ENCODE measurements at regions of chr5 and their contacts with region 1.

Region 1: GRCh38 chr5:143002459-143003328 is 232.5 kb downstream of the ARHGAP26 start:
- DNase-seq: no peak
- ATAC-seq: peak; percentile 58 to 72
- H3K4me3 ChIP-seq: no peak overlapping the region
- H3K27ac ChIP-seq: peak overlapping the region; percentile 52 to 76 (median 54)
- H3K4me1 ChIP-seq: peaks cover 38 to 39% of the 10 kb centered on the region in 2 donors
- H3K27me3 ChIP-seq: no peaks in the 10 kb centered on the region
- CTCF ChIP-seq: peak; percentile 49 to 69 (median 60)
- POLR2A ChIP-seq: peak in 1 of 2 donors; percentile 7

Region 2: DNA sequence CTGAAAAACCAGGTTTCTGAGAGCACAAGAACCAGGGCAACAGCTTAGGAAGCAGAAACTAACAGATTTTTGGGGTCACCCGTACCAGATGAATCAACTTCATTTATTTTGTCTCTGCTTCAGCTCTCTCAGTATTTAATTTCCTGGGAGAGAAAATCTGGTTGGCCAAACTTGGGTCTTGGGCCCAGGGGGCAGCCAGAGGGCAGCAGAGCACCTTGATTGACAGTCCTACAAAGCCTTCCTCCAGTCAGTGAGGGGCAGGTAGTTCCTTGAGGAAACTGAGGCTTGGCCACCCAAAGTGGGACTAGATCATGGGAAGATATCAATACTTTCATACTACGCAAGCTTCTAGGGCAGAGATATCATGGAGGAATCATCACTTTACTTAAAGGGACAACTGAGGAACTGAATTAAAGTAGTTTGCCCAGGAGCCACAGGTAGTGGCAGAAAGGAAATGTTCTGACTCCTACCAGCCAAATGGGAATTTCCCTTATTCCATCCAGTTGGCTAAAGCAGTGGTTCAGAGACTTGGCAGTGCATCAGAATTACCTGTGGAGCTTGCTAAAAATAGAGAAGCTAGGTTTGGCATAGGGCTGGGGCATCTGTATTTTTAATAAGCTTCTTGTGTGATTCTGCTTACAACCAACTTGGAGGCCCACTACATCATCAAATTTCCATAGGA is 254.0 kb before region 1 on chr5:
- in situ Hi-C with region 1: no loop called
- intact Hi-C with region 1: loop called (anchors 10 kb)
- DNase-seq: peak in 1 of 2 donors; percentile 11
- ATAC-seq: peak in 1 of 2 donors; percentile 39
- H3K4me3 ChIP-seq: no peak overlapping the region
- H3K27ac ChIP-seq: no peak overlapping the region
- H3K4me1 ChIP-seq: peaks cover 20 to 29% of the 10 kb centered on the region in 2 donors
- H3K27me3 ChIP-seq: no peaks in the 10 kb centered on the region
- CTCF ChIP-seq: peak; percentile 53 to 83 (median 77)
- POLR2A ChIP-seq: no peak

Region 3: DNA sequence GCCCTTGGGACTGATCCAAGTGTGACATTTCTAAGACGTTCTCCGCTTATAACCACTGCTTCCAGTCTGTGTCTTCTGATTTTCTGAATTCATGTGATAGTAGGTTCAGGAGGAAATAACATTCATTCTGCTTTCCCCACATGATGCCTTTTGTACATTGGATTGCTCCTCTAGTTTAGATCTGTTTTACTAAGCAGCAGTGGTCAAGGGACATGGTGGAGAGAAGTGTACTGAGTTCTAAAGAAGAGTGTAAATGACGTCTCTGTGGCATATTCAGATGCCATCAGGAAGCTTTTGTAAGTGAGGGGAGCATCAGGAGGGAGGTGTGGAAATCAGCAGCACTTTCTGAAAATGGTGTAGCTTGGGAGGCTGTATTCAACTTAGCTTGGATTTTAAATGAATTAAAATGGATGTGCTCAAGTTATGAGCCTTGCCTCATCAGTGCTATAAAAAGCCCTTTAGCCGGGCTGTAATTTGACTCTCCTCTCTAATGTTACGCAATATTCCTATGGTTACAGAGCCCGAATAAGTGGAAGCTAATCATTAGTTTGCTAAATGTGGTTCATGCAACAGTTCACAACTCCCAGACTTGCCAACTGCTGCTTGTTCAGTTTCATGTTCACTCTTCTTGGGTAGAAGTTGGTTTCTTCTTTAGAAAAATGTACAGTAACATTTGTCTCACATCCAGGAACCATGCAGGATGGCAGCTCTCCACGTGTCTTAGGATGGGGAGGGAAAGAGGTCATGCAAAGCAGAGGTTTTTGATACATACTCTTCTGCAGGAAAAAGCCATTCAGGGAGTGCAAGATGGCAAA is 48.8 kb after region 1 on chr5:
- in situ Hi-C with region 1: no loop called
- intact Hi-C with region 1: no loop called
- DNase-seq: peak in 1 of 2 donors; percentile 52
- ATAC-seq: peak; percentile 95 to 96
- H3K4me3 ChIP-seq: peak overlapping the region in 3 of 4 donors; percentile 3 to 11 (median 5)
- H3K27ac ChIP-seq: peak overlapping the region; percentile 86 to 92 (median 89)
- H3K4me1 ChIP-seq: peaks cover 59% of the 10 kb centered on the region in 2 donors
- H3K27me3 ChIP-seq: no peaks in the 10 kb centered on the region
- CTCF ChIP-seq: no peak
- POLR2A ChIP-seq: no peak

Region 4: DNA sequence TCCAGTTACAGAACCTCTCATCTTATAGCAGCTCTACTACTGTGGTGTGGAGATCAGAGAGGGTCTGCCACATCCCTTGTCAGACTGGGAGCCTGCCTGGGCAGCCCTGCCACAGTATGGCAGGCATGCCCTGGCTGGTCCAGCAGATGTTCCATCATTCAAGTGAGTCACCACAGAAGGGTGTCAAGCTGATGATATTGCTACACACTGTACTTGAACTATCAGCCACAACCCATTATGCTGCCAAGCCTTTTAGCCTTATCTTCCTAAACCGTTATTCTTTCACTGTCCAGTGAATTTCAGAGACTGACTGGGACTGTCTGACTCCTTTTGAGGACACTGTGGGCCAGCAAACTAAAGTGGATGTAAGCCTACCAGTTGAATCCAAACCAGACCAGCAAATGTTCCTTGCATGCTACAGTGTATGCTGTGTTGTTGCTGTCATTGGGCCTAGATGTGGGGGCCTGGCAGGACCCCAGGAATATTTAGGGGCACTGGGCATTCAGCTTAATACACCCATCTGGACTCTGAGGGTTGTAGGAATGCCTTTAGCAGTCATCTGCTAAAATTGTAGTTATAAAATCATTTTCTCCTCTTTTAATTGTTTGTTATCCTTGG is 198.2 kb after region 1 on chr5:
- in situ Hi-C with region 1: no loop called
- intact Hi-C with region 1: no loop called
- DNase-seq: peak; percentile 75 to 82
- ATAC-seq: peak; percentile 99 to 100
- H3K4me3 ChIP-seq: no peak overlapping the region
- H3K27ac ChIP-seq: peak overlapping the region; percentile 63 to 84 (median 72)
- H3K4me1 ChIP-seq: peaks cover 32 to 34% of the 10 kb centered on the region in 2 donors
- H3K27me3 ChIP-seq: no peaks in the 10 kb centered on the region
- CTCF ChIP-seq: no peak
- POLR2A ChIP-seq: no peak

Measured in gastrocnemius medialis (tissue), 4 donors.